CD8-positive, alpha-beta memory T cell (primary cell): ENCODE measurements at regions of chr2 and their contacts with region 1.

Region 1: DNA sequence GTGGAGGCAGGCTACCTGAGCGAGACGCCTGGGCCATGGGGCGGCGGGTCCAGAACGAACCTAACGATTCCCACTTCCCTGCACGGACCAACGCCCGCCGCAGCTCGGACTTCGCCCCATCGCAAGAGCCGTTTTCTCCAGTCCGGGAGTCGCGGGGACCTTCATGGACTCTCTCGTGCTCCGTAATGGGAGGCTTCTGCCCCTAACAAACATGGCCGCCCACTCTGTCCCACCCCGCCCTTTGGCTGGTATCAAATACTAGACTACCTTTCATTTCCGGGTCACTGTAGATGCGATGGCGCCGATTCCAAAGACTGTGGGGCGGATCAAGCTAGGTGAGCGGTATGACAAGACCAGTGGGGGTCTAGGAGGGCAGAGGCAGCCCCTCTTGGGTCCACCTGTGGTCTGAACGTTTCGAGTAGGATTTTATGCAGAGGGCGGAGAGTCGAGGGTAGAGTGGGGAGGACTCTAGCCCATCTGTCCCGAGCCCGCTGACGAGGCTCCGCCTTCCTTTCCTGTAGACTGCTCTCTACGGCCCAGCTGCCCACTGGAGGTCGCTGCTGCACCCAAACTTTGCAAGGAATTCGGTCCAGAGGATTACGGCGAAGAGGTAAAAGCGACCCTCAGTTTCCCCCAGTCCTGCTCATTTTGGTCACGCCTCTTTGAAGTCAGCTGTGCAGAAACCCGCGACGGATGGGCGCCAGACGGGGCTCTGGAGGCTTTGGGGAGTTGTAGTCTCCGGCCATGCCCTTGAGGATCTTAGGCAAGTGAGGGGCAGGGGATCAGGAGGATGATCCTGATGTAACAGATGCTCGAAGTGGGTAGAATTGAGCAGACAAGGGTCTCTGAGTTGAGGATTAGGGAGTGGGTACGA is at the starts of genes CCDC142 and TTC31:
- DNase-seq: peak; percentile 87 to 96 (median 93)
- H3K4me3 ChIP-seq: peak within 1 kb of the TSS; percentile 99
- H3K4me3 Mint-ChIP-seq: peak within 1 kb of the TSS; percentile 98 to 100 (median 100)
- H3K27ac ChIP-seq: peak within 1 kb of the TSS; percentile 89
- H3K27ac Mint-ChIP-seq: peak within 1 kb of the TSS; percentile 95 to 100 (median 100)
- H3K4me1 ChIP-seq: peaks cover 25% of the 10 kb centered on the region
- H3K4me1 Mint-ChIP-seq: peaks cover 32 to 56% (median 45%) of the 10 kb centered on the region in 3 donors
- H3K27me3 ChIP-seq: no peaks in the 10 kb centered on the region
- H3K27me3 Mint-ChIP-seq: no peaks in the 10 kb centered on the region
- total RNA-seq, gene CCDC142: 20.3 to 22.8 TPM
- total RNA-seq, gene TTC31: 26.4 to 28.0 TPM

Region 2: GRCh38 chr2:74458132-74458925 is 24.7 kb before region 1 on chr2 and contains the start of gene WBP1:
- CTCF ChIA-PET with region 1: interaction called, 83 read pairs
- POLR2A ChIA-PET with region 1: interaction called, 38 read pairs
- DNase-seq: peak; percentile 97 to 100 (median 99)
- H3K4me3 ChIP-seq: peak within 1 kb of the TSS; percentile 90
- H3K4me3 Mint-ChIP-seq: peak within 1 kb of the TSS; percentile 87 to 98 (median 92)
- H3K27ac ChIP-seq: peak within 1 kb of the TSS; percentile 94
- H3K27ac Mint-ChIP-seq: peak within 1 kb of the TSS; percentile 91 to 100 (median 100)
- H3K4me1 ChIP-seq: peaks cover 36% of the 10 kb centered on the region
- H3K4me1 Mint-ChIP-seq: peaks cover 51 to 65% (median 62%) of the 10 kb centered on the region in 3 donors
- H3K27me3 ChIP-seq: no peaks in the 10 kb centered on the region
- H3K27me3 Mint-ChIP-seq: peaks cover 0 to 2% of the 10 kb centered on the region in 2 donors
- total RNA-seq, gene WBP1: 31.2 to 31.6 TPM

Region 3: GRCh38 chr2:74472086-74472944 is 10.7 kb before region 1 on chr2 and contains the start of gene MRPL53:
- CTCF ChIA-PET with region 1: interaction called, 49 read pairs
- POLR2A ChIA-PET with region 1: interaction called, 56 read pairs
- DNase-seq: peak; percentile 94 to 97 (median 95)
- H3K4me3 ChIP-seq: peak within 1 kb of the TSS; percentile 95
- H3K4me3 Mint-ChIP-seq: peak within 1 kb of the TSS; percentile 93 to 98 (median 96)
- H3K27ac ChIP-seq: peak within 1 kb of the TSS; percentile 83
- H3K27ac Mint-ChIP-seq: peak within 1 kb of the TSS; percentile 97 to 100 (median 99)
- H3K4me1 ChIP-seq: peaks cover 22% of the 10 kb centered on the region
- H3K4me1 Mint-ChIP-seq: peaks cover 21 to 27% (median 25%) of the 10 kb centered on the region in 3 donors
- H3K27me3 ChIP-seq: no peaks in the 10 kb centered on the region
- H3K27me3 Mint-ChIP-seq: peaks cover 0 to 5% of the 10 kb centered on the region in 2 donors
- total RNA-seq, gene MRPL53: 115 to 118 TPM

Region 4: GRCh38 chr2:74507145-74507925 is 24.3 kb after region 1 on chr2 and contains the start of gene PCGF1:
- CTCF ChIA-PET with region 1: interaction called, 10 read pairs
- POLR2A ChIA-PET with region 1: interaction called, 3 read pairs
- DNase-seq: peak; percentile 97 to 99 (median 98)
- H3K4me3 ChIP-seq: peak within 1 kb of the TSS; percentile 100
- H3K4me3 Mint-ChIP-seq: peak within 1 kb of the TSS; percentile 95 to 100 (median 100)
- H3K27ac ChIP-seq: peak within 1 kb of the TSS; percentile 96
- H3K27ac Mint-ChIP-seq: peak within 1 kb of the TSS; percentile 95 to 100 (median 100)
- H3K4me1 ChIP-seq: peaks cover 38% of the 10 kb centered on the region
- H3K4me1 Mint-ChIP-seq: peaks cover 40 to 63% (median 59%) of the 10 kb centered on the region in 3 donors
- H3K27me3 ChIP-seq: peaks cover 9% of the 10 kb centered on the region
- H3K27me3 Mint-ChIP-seq: peaks cover 31 to 57% of the 10 kb centered on the region in 2 donors
- total RNA-seq, gene PCGF1: 29.6 to 38.7 TPM

Region 5: GRCh38 chr2:74544634-74545033 is 61.6 kb after region 1 on chr2:
- CTCF ChIA-PET with region 1: interaction called, 16 read pairs
- POLR2A ChIA-PET with region 1: no interaction called
- DNase-seq: no peak
- H3K4me3 ChIP-seq: no peak overlapping the region
- H3K4me3 Mint-ChIP-seq: no peak overlapping the region
- H3K27ac ChIP-seq: no peak overlapping the region
- H3K27ac Mint-ChIP-seq: peak overlapping the region in 1 of 8 donors; percentile 1
- H3K4me1 ChIP-seq: peaks cover 10% of the 10 kb centered on the region
- H3K4me1 Mint-ChIP-seq: peaks cover 3 to 12% (median 7%) of the 10 kb centered on the region in 3 donors
- H3K27me3 ChIP-seq: peaks cover 26% of the 10 kb centered on the region
- H3K27me3 Mint-ChIP-seq: peaks cover 33 to 50% of the 10 kb centered on the region in 2 donors

Region 6: GRCh38 chr2:74602586-74603281 is 119.7 kb after region 1 on chr2:
- CTCF ChIA-PET with region 1: no interaction called
- POLR2A ChIA-PET with region 1: no interaction called
- DNase-seq: no peak
- H3K4me3 ChIP-seq: no peak overlapping the region
- H3K4me3 Mint-ChIP-seq: no peak overlapping the region
- H3K27ac ChIP-seq: no peak overlapping the region
- H3K27ac Mint-ChIP-seq: no peak overlapping the region
- H3K4me1 ChIP-seq: no peaks in the 10 kb centered on the region
- H3K4me1 Mint-ChIP-seq: peaks cover 0 to 2% (median 0%) of the 10 kb centered on the region in 3 donors
- H3K27me3 ChIP-seq: no peaks in the 10 kb centered on the region
- H3K27me3 Mint-ChIP-seq: peaks cover 15 to 35% of the 10 kb centered on the region in 2 donors